ENCODE measurements at regions of chr10 and their contacts with region 1.

Region 1: DNA sequence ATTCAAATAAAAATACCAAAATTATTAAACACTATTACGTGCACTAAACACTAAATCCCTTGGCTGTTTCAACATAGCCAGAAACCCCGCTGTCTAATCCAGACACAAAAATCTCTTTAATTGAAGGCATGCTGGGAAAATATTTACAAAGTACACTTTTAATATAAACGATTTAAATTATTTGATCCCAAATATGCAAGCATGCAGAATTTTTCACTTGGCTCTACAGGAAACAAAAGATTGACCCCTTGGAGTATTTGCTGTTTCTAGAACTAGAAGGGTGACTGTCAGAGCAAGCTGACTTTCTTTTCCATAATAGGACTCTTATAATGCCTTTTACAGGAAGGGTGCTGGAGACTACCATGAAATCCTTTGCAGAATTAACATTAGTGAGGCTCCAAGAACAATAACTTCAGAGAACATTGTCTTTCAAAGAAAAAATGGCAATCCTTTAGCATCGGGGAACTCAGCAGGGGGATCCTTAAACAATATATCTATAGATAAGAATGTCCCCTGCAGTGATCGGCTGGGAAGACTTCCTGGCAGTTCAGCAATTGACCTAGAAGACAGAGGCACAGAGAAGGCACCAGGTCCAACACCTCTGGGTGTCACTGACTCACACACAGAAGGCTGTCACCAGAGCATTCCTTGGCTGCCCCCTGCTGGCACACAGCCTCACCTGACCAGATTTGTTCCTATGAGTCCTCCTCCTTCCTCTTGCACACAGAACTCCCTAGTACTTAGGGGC is 55.8 kb upstream of the MRLN start:
- DNase-seq: peak; percentile 53
- H3K4me3 Mint-ChIP-seq: no peak overlapping the region
- H3K27ac Mint-ChIP-seq: no peak overlapping the region
- H3K4me1 Mint-ChIP-seq: peaks cover 5% of the 10 kb centered on the region
- H3K27me3 Mint-ChIP-seq: no peaks in the 10 kb centered on the region

Region 2: DNA sequence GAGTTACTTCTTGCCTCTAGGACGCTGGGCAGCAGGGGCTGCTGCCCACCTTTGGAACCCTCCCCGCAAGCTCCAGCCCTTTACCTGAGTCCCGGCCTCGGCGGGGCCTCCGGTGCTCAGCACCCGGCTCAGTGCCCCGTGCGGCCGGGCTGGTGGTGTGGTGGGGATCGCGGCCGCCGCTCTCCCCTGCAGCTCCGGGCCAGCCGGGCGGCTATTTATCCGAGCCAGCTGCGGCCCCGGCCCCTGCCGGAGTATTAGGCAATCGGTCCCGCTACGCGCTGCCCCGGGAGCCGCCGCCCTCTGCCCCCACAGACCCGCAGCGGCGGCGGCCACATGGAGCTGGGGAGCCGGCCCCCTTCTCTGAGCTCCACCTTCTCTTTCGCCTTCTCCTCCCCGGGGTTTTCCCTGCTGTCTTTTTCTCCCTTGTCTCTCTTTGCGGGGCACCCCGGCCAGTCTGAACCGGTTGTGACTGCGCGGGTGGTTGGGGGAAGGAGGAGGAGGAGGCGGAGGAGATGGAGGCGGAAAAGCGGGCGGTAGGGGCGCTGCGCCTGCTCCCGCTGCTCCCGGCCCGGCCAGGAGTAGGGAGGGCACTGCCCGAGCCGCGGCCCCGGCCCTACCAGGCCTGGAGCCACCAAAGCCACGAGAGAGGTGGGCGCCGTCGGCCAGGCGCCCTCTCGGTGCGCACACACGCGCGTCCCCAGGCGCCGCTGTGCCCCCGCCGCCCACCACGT is 99.5 kb before region 1 on chr10 and contains the start of gene SLC16A9:
- intact Hi-C with region 1: loop called (anchors 10 kb)
- DNase-seq: peak; percentile 52
- H3K4me3 Mint-ChIP-seq: peak within 1 kb of the TSS; percentile 73
- H3K27ac Mint-ChIP-seq: peak within 1 kb of the TSS; percentile 24
- H3K4me1 Mint-ChIP-seq: peaks cover 3% of the 10 kb centered on the region
- H3K27me3 Mint-ChIP-seq: peaks cover 62% of the 10 kb centered on the region
- total RNA-seq, gene SLC16A9: 1.9 and 2.1 TPM in 2 replicates

Region 3: DNA sequence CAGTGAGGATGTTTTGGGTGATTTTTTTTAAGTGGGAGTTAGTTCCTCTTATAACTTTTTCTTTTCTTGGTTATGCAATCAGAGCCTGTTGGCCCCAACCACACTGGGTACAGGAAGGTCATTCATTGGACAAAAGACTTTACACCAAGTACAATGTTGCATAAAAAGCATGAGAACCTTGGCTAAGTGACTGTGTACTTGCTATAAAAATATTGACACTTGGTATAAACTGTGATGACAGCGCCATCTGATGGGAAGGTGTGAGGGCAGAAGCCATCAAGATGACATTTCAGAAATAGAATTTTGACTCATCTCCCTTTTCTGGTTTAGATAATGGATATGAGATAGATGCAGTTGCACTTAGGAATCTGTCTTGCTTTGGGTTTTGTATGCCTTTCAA is 223.7 kb after region 1 on chr10:
- intact Hi-C with region 1: loop called (anchors 5 kb)
- DNase-seq: peak; percentile 20
- H3K4me3 Mint-ChIP-seq: no peak overlapping the region
- H3K27ac Mint-ChIP-seq: no peak overlapping the region
- H3K4me1 Mint-ChIP-seq: peaks cover 14% of the 10 kb centered on the region
- H3K27me3 Mint-ChIP-seq: no peaks in the 10 kb centered on the region

Measured in activated T-helper 2 cell treated with anti-CD3 and anti-CD28 coated beads, Interferon-gamma antibody, Interleukin-2, Interleukin-4, amounts not matched to agents 10 μg/mL and 5 μg/mL and 100 μg/mL, durations not matched to agents 14 hours and 24 hours and 36 hours (primary cell).